SK-N-SH (cell line): ENCODE measurements at regions of chr1 and their contacts with region 1.

Region 1: DNA sequence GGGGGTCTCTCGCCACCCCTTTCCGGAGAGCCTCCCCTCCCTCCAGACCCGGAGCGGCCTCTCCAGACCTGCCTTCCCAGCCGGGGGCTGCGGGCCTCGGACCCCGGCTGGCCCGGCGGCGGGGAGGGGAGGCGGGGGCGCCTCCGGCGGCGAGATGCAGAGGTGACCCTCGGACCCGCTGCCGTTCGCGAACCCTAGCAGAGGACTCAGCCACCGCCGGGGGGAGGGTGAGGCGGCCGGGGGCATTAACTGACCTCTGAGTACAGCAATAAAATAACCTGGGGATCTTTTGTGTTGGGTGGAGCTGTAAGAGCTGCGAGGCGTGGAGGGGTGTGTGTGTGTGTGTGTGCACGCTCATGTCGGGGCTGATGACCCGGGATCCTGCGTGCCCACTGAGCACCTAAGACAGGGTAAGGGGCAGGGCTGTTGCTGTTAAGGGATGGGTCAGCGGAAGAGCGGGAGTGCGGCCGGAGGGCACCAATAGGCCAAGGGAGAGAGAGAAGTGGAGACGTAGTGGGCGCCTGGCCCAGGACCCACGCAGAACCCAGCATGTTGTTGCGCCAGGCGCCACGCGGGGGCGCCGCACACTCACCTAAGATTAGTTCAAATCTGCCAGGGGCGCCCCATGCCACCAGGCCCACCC is 6.3 kb downstream of the HAPLN2 start:
- DNase-seq: peak; percentile 79
- H3K4me3 ChIP-seq: peak overlapping the region; percentile 10 to 31; a peak in 2 of 4 replicates
- H3K27ac ChIP-seq: no peak overlapping the region
- H3K4me1 ChIP-seq: peaks cover 0 to 13% of the 10 kb centered on the region in 2 experiments; a peak in 1 of 4 replicates
- H3K27me3 ChIP-seq: peaks cover 29% of the 10 kb centered on the region
- CTCF ChIP-seq: peak; percentile 96
- EP300 ChIP-seq: no peak
- RAD21 ChIP-seq: peak; percentile 76

Region 2: DNA sequence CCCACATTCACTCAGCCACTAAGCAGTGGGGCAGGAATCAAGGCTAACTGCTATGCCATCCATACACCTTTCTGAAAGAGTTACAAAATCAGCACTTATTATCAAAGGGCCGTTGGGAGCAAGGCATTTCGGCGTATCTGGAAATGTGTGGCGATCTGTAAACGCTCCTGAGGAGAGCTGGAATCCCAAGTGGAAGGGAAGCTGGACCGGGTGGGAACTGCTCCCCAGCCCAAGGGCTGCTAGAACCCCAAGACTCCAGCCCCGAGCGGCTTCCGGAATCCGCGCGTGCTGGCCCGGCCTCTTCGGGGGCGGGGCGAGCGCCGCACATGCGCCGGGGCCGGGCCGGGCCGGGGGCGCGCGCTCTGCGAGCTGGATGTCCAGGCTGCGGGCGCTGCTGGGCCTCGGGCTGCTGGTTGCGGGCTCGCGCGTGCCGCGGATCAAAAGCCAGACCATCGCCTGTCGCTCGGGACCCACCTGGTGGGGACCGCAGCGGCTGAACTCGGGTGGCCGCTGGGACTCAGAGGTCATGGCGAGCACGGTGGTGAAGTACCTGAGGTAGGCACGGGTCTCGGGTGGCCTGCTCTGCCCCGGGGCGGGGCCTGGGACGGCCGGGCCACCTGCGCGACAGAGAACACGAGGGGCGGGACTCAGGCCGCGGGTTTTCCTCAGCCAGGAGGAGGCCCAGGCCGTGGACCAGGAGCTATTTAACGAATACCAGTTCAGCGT is 34.0 kb before region 1 on chr1 and contains the start of gene NAXE:
- CTCF ChIA-PET with region 1: interaction called, 10 read pairs
- POLR2A ChIA-PET with region 1: no interaction called
- DNase-seq: peak; percentile 95
- H3K4me3 ChIP-seq: peak within 1 kb of the TSS; percentile 83 to 86
- H3K27ac ChIP-seq: peak within 1 kb of the TSS; percentile 64 to 93
- H3K4me1 ChIP-seq: peaks cover 0 to 16% of the 10 kb centered on the region in 2 experiments; a peak in 2 of 4 replicates
- H3K27me3 ChIP-seq: no peaks in the 10 kb centered on the region
- CTCF ChIP-seq: no peak
- EP300 ChIP-seq: no peak
- RAD21 ChIP-seq: no peak
- polyA plus RNA-seq, gene NAXE: 68.5 and 98.4 TPM in 2 replicates

Region 3: GRCh38 chr1:156641761-156642264 is 16.3 kb after region 1 on chr1 and contains the start of gene BCAN:
- CTCF ChIA-PET with region 1: interaction called, 244 read pairs
- POLR2A ChIA-PET with region 1: no interaction called
- DNase-seq: peak; percentile 86
- H3K4me3 ChIP-seq: peak within 1 kb of the TSS; percentile 39 to 46
- H3K27ac ChIP-seq: no peak within 1 kb of the TSS
- H3K4me1 ChIP-seq: peaks cover 0 to 34% of the 10 kb centered on the region in 2 experiments; a peak in 1 of 4 replicates
- H3K27me3 ChIP-seq: peaks cover 35% of the 10 kb centered on the region
- CTCF ChIP-seq: no peak
- EP300 ChIP-seq: no peak
- RAD21 ChIP-seq: no peak
- polyA plus RNA-seq, gene BCAN: 0.13 and 0.25 TPM in 2 replicates

Region 4: DNA sequence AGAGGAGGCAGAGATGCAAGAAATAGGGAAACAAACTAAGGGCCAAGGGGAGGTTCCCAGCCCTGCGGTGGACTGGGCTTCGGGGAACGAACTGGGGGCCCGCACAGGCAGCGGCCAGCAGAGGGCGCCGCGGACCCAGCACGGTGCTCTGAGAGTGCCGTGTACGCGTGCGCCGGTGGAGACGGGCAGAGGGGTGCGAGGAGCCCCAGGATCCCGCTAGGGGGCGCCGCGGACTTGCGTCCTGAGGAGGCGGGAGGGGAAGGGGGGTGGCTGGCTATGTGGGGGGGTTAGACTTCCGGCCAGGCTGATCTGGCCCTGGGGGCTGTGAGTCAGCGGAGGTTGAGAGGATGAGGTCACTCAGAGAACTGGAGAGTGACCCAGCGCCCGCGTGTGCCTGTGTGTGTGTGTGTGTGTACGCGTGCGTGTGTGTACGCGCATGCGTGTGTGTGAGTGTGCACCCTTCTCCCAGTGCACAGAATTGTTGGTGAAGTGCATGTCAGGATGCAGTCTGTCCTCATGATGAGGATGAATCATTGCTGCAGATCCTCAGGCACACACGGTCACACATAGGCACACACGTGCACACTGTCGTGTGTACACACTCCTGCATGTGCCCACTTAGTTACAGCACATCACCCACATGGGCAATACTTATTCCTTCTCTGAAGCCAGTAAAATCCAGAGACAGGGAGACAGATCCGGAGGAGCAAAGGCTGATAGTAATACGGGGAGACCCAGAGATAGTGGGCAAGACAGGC is 34.6 kb after region 1 on chr1:
- CTCF ChIA-PET with region 1: interaction called, 643 read pairs
- POLR2A ChIA-PET with region 1: interaction called, 7 read pairs
- DNase-seq: peak; percentile 99
- H3K4me3 ChIP-seq: peak overlapping the region; percentile 34 to 54; a peak in 2 of 4 replicates
- H3K27ac ChIP-seq: peak overlapping the region; percentile 72 to 87
- H3K4me1 ChIP-seq: peaks cover 44 to 48% of the 10 kb centered on the region in 2 experiments; a peak in 3 of 4 replicates
- H3K27me3 ChIP-seq: no peaks in the 10 kb centered on the region
- CTCF ChIP-seq: peak; percentile 99
- EP300 ChIP-seq: peak in 1 of 2 experiments; percentile 37; a peak in 1 of 4 replicates
- RAD21 ChIP-seq: peak; percentile 90

Region 5: DNA sequence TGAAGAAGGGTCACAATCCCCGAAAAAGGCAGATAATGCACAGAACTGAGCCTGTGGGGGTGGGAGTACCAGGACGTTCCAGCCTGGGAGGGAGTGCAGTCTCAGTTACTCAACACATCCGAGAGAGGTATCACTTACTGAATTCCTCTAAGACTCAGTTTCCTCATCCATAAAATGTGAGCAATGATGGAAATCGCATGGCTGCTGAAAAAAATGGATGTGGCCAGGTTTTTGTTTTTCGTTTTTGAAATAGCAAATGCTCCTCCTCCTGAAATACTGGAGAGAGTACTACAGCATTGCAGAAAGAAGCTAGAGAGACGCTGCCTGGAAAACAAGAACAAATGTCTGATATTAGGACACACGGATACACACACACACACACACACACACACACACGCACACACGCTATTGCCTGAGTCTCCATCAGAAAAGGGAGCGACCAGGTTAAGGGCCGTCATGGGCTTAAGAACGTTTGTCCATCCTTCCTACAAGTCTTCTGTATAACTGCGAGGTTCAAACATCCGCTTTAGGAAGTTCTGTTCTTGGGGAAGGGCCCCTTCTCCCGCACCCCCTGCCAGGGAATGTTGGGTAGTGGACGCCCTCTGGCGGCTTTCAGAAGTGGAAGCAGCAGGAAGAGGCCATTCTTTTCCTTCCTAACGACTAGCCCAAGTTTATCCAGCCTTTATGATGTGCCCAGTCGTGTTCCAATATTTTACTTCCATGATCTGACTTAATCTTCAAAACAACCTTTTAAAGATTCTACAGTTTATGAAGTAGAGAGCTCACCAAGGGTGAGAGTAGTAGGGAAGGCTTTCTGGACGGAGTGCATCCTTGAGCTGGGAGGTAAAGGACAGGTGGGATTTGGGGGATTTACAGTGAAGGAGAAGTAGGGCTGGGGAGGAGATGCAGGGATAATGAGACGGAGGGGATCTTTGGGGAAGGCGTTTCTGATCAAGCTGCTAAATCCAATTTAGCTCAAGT is 52.3 kb after region 1 on chr1:
- CTCF ChIA-PET with region 1: interaction called, 237 read pairs
- POLR2A ChIA-PET with region 1: interaction called, 9 read pairs
- DNase-seq: peak; percentile 78
- H3K4me3 ChIP-seq: peak overlapping the region; percentile 55 to 71
- H3K27ac ChIP-seq: peak overlapping the region; percentile 40 to 67; a peak in 3 of 4 replicates
- H3K4me1 ChIP-seq: peaks cover 21 to 42% of the 10 kb centered on the region in 2 experiments; a peak in 3 of 4 replicates
- H3K27me3 ChIP-seq: no peaks in the 10 kb centered on the region
- CTCF ChIP-seq: peak; percentile 97
- EP300 ChIP-seq: no peak
- RAD21 ChIP-seq: peak; percentile 98